Activated CD4-positive, alpha-beta memory T cell treated with anti-CD3 and anti-CD28 coated beads for 36 hours (primary cell): ENCODE measurements at regions of chr7 and their contacts with region 1.

Region 1: GRCh38 chr7:155277690-155277994 is 20.0 kb upstream of the INSIG1 start:
- DNase-seq: peak; percentile 76
- H3K4me3 Mint-ChIP-seq: no peak overlapping the region
- H3K27ac Mint-ChIP-seq: no peak overlapping the region
- H3K4me1 Mint-ChIP-seq: peaks cover 28% of the 10 kb centered on the region
- H3K27me3 Mint-ChIP-seq: peaks cover 32% of the 10 kb centered on the region

Region 2: GRCh38 chr7:155219936-155220769 is 57.5 kb before region 1 on chr7:
- CTCF ChIA-PET with region 1: no interaction called
- POLR2A ChIA-PET with region 1: no interaction called
- intact Hi-C with region 1: no loop called
- DNase-seq: no peak
- H3K4me3 Mint-ChIP-seq: no peak overlapping the region
- H3K27ac Mint-ChIP-seq: no peak overlapping the region
- H3K4me1 Mint-ChIP-seq: peaks cover 21% of the 10 kb centered on the region
- H3K27me3 Mint-ChIP-seq: peaks cover 2% of the 10 kb centered on the region

Region 3: DNA sequence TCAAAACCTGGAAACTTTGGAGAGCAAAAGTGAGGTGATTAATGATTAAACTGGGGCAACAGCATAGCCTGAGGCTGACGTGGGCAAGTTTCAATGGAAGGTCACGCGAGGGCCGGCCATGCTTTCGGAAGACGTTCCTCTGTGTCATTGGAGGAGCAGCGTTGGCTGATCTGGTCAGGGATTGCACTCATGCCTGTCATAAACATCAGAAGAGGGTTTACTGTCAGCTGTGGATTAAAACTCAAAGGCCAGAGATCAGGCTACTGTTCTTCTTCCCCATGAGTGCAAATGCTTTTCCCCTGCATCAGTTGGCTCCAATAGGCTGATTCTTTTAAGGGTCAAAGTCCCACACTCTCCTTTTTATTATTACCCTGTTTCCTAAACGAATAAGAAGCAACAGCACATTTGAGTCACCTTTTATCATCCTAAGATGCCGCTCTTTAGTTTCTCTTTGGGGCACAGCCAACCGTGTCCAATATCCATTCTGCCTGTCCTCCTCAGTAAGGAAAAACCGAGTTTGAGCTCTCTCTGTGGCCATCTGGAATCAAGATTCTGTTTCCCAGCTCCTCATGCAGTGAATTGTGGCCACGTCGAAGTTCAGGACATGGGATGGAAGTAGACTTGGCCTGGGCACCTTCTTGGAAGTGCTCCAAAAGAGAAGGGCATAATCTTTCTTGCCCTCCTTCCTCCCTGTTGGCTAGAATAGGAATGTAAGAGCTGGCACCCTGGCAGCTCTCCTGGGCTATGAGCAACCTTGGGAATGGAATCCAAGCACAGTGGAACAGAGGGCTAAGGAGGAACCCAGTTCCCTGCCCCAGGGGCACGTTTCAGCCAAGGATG is 42.5 kb before region 1 on chr7:
- CTCF ChIA-PET with region 1: no interaction called
- POLR2A ChIA-PET with region 1: no interaction called
- intact Hi-C with region 1: loop called (anchors 5 kb)
- DNase-seq: no peak
- H3K4me3 Mint-ChIP-seq: no peak overlapping the region
- H3K27ac Mint-ChIP-seq: no peak overlapping the region
- H3K4me1 Mint-ChIP-seq: peaks cover 3% of the 10 kb centered on the region
- H3K27me3 Mint-ChIP-seq: peaks cover 12% of the 10 kb centered on the region